ENCODE measurements at regions of chr2 and their contacts with region 1.

Region 1: GRCh38 chr2:131105156-131105949 is at the start of gene PLEKHB2:
- DNase-seq: peak; percentile 88 to 99 (median 94)
- ATAC-seq: peak; percentile 81
- H3K4me3 ChIP-seq: peak within 1 kb of the TSS; percentile 95
- H3K4me3 Mint-ChIP-seq: peak within 1 kb of the TSS; percentile 93 to 98 (median 96)
- H3K27ac ChIP-seq: peak within 1 kb of the TSS; percentile 98
- H3K27ac Mint-ChIP-seq: peak within 1 kb of the TSS; percentile 93 to 99 (median 96)
- H3K4me1 ChIP-seq: peaks cover 15 to 22% of the 10 kb centered on the region in 2 donors
- H3K4me1 Mint-ChIP-seq: peaks cover 31 to 70% (median 52%) of the 10 kb centered on the region in 7 donors
- H3K27me3 ChIP-seq: no peaks in the 10 kb centered on the region
- H3K27me3 Mint-ChIP-seq: no peaks in the 10 kb centered on the region
- total RNA-seq, gene PLEKHB2: 43.1 to 92.3 (median 55.8) TPM

Region 2: DNA sequence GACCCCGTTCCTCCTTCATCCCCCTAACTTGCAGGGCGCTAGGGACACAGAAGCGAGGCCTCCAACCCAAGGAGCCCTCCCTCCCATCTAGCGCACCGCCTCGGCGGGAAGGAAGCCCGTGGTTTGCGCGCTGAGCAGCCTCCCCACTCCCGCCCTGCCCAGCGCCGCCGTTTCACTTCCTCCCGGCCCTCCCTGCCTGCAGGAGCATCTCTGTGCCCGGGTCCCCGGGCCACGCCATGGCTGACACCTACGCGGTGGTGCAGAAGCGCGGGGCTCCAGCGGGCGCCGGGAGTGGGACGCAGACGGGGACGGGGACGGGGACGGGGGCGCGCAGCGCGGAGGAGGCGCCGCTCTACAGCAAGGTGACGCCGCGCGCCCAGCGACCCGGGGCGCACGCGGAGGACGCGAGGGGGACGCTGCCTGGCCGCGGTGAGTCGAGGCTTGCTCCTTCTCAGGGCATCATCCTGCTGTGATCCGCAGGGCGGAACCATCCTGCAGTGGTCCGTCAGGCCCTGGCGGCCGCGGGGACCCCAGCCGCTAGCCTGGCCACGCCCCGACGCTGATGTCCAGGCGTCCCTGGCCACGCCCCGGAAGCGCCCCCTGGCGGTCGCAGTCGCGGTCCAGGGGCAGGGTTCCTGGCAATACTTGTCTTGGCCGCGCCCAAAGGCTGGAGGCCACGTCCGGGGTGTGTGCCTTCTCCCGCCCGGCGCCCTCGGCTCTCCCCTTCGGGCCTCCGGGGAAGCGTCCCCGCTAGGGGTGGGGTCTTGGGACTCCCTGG is 733.1 kb before region 1 on chr2:
- CTCF ChIA-PET with region 1: no interaction called
- POLR2A ChIA-PET with region 1: no interaction called
- intact Hi-C with region 1: loop called (anchors 10 kb)
- DNase-seq: peak; percentile 49 to 92 (median 71)
- ATAC-seq: peak; percentile 86
- H3K4me3 ChIP-seq: peak overlapping the region; percentile 83
- H3K4me3 Mint-ChIP-seq: peak overlapping the region; percentile 87 to 99 (median 94)
- H3K27ac ChIP-seq: peak overlapping the region; percentile 71
- H3K27ac Mint-ChIP-seq: peak overlapping the region; percentile 88 to 97 (median 95)
- H3K4me1 ChIP-seq: peaks cover 25 to 34% of the 10 kb centered on the region in 2 donors
- H3K4me1 Mint-ChIP-seq: peaks cover 47 to 69% (median 65%) of the 10 kb centered on the region in 7 donors
- H3K27me3 ChIP-seq: no peaks in the 10 kb centered on the region
- H3K27me3 Mint-ChIP-seq: no peaks in the 10 kb centered on the region

Region 3: DNA sequence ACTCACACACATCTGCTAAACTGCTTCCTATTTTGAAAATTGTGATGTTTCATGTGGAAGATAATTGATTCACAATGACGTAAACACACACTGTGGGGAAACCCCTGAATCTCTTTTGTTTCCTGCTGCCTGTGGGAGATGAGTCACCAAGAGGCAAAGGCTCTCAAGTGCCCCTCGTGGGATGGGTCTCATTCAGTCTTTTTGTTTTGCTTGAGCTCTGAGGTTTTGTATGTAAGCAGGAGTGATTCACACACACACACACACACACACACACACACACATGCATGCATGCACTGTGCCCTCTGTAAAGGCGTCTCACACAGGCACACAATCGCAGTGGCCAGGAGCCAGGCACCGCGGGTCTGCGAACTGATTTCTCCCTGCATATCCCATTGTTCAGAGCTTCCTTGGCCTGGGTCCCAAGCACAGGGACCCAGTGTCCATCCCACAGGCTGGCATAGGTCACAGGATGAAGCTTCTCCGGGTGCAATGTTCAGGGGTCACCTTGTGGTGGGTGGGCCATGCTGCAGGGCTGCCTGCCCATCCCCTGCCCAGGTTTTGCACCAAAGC is 280.8 kb before region 1 on chr2:
- CTCF ChIA-PET with region 1: no interaction called
- POLR2A ChIA-PET with region 1: no interaction called
- intact Hi-C with region 1: loop called (anchors 1 to 10 kb)
- DNase-seq: peak in 7 of 9 donors; percentile 25 to 75 (median 54)
- ATAC-seq: peak; percentile 85
- H3K4me3 ChIP-seq: no peak overlapping the region
- H3K4me3 Mint-ChIP-seq: peak overlapping the region in 2 of 10 donors; percentile 24 to 60
- H3K27ac ChIP-seq: no peak overlapping the region
- H3K27ac Mint-ChIP-seq: peak overlapping the region in 7 of 9 donors; percentile 41 to 83 (median 68)
- H3K4me1 ChIP-seq: peaks cover 11 to 14% of the 10 kb centered on the region in 2 donors
- H3K4me1 Mint-ChIP-seq: peaks cover 5 to 19% (median 9%) of the 10 kb centered on the region in 7 donors
- H3K27me3 ChIP-seq: no peaks in the 10 kb centered on the region
- H3K27me3 Mint-ChIP-seq: peaks cover 0 to 15% (median 0%) of the 10 kb centered on the region in 5 donors

Region 4: GRCh38 chr2:131040661-131041401 is 64.5 kb before region 1 on chr2:
- CTCF ChIA-PET with region 1: no interaction called
- POLR2A ChIA-PET with region 1: interaction called, 4 read pairs
- intact Hi-C with region 1: loop called in 1 of 2 experiments (anchors 5 kb)
- DNase-seq: peak in 3 of 9 donors; percentile 17 to 28 (median 20)
- ATAC-seq: no peak
- H3K4me3 ChIP-seq: peak overlapping the region; percentile 63
- H3K4me3 Mint-ChIP-seq: peak overlapping the region; percentile 67 to 92 (median 84)
- H3K27ac ChIP-seq: peak overlapping the region; percentile 42
- H3K27ac Mint-ChIP-seq: peak overlapping the region; percentile 18 to 93 (median 79)
- H3K4me1 ChIP-seq: peaks cover 19 to 23% of the 10 kb centered on the region in 2 donors
- H3K4me1 Mint-ChIP-seq: peaks cover 7 to 42% (median 26%) of the 10 kb centered on the region in 7 donors
- H3K27me3 ChIP-seq: no peaks in the 10 kb centered on the region
- H3K27me3 Mint-ChIP-seq: peaks cover 0 to 31% (median 0%) of the 10 kb centered on the region in 5 donors

Region 5: GRCh38 chr2:131154071-131154531 is 48.7 kb after region 1 on chr2:
- CTCF ChIA-PET with region 1: no interaction called
- POLR2A ChIA-PET with region 1: no interaction called
- intact Hi-C with region 1: loop called in 1 of 2 experiments (anchors 1 kb)
- DNase-seq: peak; percentile 34 to 78 (median 55)
- ATAC-seq: peak; percentile 86
- H3K4me3 ChIP-seq: peak overlapping the region; percentile 11
- H3K4me3 Mint-ChIP-seq: peak overlapping the region in 3 of 10 donors; percentile 32 to 41 (median 33)
- H3K27ac ChIP-seq: no peak overlapping the region
- H3K27ac Mint-ChIP-seq: peak overlapping the region in 4 of 9 donors; percentile 0 to 46 (median 10)
- H3K4me1 ChIP-seq: no peaks in the 10 kb centered on the region
- H3K4me1 Mint-ChIP-seq: peaks cover 5 to 25% (median 16%) of the 10 kb centered on the region in 7 donors
- H3K27me3 ChIP-seq: no peaks in the 10 kb centered on the region
- H3K27me3 Mint-ChIP-seq: peaks cover 0 to 8% (median 0%) of the 10 kb centered on the region in 5 donors

Measured in naive thymus-derived CD4-positive, alpha-beta T cell (primary cell).